Mammary epithelial cell (primary cell): ENCODE measurements at regions of chr16 and their contacts with region 1.

Region 1: GRCh38 chr16:17476414-17477270 is 5.9 kb upstream of the XYLT1 start:
- DNase-seq: peak; percentile 36
- H3K4me3 ChIP-seq: no peak overlapping the region
- H3K27ac ChIP-seq: no peak overlapping the region
- H3K4me1 ChIP-seq: peaks cover under 1% of the 10 kb centered on the region
- H3K27me3 ChIP-seq: no peaks in the 10 kb centered on the region
- CTCF ChIP-seq: peak; percentile 72 to 78

Region 2: DNA sequence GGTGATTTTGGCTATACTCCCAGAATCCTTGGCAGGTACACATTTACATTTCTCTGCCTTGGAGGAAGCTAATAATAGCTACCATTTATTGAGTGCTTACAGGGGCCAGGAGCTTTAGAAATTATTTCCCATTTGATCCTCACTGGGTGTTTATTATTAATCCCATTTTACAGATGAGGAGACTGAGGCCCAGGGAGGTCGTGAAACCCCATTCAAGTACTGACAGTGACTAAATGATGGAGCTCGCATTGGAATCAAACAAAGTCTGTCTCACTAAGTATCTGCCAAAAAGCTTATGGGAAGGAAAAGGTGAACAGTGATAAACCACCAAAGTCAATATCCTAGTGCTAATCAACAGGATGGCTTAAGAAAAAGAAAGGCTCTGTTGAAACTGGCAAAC is 27.4 kb after region 1 on chr16:
- CTCF ChIA-PET with region 1: no interaction called
- dilution Hi-C with region 1: no loop called
- in situ Hi-C with region 1: no loop called
- intact Hi-C with region 1: no loop called
- DNase-seq: no peak
- H3K4me3 ChIP-seq: no peak overlapping the region
- H3K27ac ChIP-seq: no peak overlapping the region
- H3K4me1 ChIP-seq: no peaks in the 10 kb centered on the region
- H3K27me3 ChIP-seq: no peaks in the 10 kb centered on the region
- CTCF ChIP-seq: no peak

Region 3: GRCh38 chr16:17529982-17530765 is 53.5 kb after region 1 on chr16:
- CTCF ChIA-PET with region 1: no interaction called
- dilution Hi-C with region 1: loop called (anchors 10 kb)
- in situ Hi-C with region 1: no loop called
- intact Hi-C with region 1: no loop called
- DNase-seq: no peak
- H3K4me3 ChIP-seq: no peak overlapping the region
- H3K27ac ChIP-seq: no peak overlapping the region
- H3K4me1 ChIP-seq: no peaks in the 10 kb centered on the region
- H3K27me3 ChIP-seq: no peaks in the 10 kb centered on the region
- CTCF ChIP-seq: no peak

Region 4: GRCh38 chr16:17773698-17774101 is 297.1 kb after region 1 on chr16:
- CTCF ChIA-PET with region 1: no interaction called
- dilution Hi-C with region 1: no loop called
- in situ Hi-C with region 1: no loop called
- intact Hi-C with region 1: loop called (anchors 10 kb)
- DNase-seq: no peak
- H3K4me3 ChIP-seq: no peak overlapping the region
- H3K27ac ChIP-seq: no peak overlapping the region
- H3K4me1 ChIP-seq: no peaks in the 10 kb centered on the region
- H3K27me3 ChIP-seq: no peaks in the 10 kb centered on the region
- CTCF ChIP-seq: no peak

Region 5: DNA sequence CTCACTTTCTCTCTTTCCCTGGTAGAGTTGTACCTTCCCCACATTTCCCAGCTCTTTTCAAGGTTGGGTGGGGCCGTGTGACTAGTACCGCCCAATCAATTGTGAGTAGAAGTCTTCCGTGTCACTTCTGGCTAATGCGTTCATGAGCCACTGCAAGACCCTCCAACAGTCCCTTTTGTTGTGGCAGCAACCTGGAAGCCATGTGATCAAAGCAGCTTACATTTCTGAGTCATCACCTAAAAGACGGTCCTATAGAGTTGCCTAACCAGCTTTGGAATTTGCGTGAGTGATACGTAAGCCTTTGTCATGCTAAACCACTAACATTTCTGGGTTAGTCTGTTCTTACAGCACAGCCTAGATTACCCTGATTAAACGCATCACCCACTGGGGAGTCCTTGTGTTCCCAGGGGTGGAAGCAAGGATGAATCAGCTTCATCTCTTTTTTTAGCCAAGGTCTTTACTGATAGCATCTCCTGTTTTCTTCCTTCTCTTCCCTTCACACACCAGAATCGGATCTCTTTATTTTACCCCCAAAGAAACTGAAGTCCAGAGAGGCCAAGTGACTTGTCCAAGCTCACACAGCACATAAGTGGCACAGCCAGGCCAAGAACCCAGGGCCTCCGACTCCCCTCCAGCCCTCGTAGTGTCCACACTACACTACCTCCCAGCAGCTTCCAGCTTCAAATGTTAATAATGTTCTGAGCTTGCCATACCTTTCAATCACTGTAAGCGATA is 360.4 kb after region 1 on chr16:
- CTCF ChIA-PET with region 1: no interaction called
- dilution Hi-C with region 1: loop called (anchors 25 kb)
- in situ Hi-C with region 1: no loop called
- intact Hi-C with region 1: loop called (anchors 5 kb)
- DNase-seq: peak; percentile 93
- H3K4me3 ChIP-seq: no peak overlapping the region
- H3K27ac ChIP-seq: no peak overlapping the region
- H3K4me1 ChIP-seq: no peaks in the 10 kb centered on the region
- H3K27me3 ChIP-seq: no peaks in the 10 kb centered on the region
- CTCF ChIP-seq: no peak